ENCODE measurements at regions of chr3 and their contacts with region 1.

Region 1: GRCh38 chr3:61574854-61575253 is 13.5 kb downstream of the PTPRG start:
- ATAC-seq: peak in 3 of 8 experiments; percentile 17 to 94 (median 88)
- H3K4me3 ChIP-seq: no peak overlapping the region
- H3K27ac ChIP-seq: no peak overlapping the region
- H3K4me1 ChIP-seq: peaks cover 0 to 3% of the 10 kb centered on the region in 2 donors

Region 2: DNA sequence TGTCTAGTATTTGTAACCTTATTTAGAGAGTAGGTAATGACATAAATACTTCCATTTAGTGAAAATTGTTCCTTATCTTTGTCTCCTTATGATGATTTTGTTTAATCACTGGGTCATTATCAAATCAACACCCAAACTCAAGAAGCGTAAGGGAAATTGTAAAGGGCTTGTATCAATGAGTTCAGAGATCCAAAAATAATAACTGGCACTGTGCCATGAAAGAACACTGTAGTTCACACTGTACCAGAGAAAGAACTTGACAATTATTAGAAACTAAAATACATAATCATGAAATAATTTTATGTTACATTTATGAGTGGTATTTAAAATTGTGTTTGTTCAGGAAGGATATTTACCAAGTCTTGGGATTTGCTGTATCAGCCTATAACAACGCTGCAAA is 1219.0 kb before region 1 on chr3:
- in situ Hi-C with region 1: no loop called
- ATAC-seq: no peak
- H3K4me3 ChIP-seq: no peak overlapping the region
- H3K27ac ChIP-seq: no peak overlapping the region
- H3K4me1 ChIP-seq: no peaks in the 10 kb centered on the region

Region 3: GRCh38 chr3:61807865-61808276 is 233.0 kb after region 1 on chr3:
- in situ Hi-C with region 1: loop called in 1 of 9 experiments (anchors 25 kb)
- ATAC-seq: peak in 4 of 8 experiments; percentile 33 to 61 (median 52)
- H3K4me3 ChIP-seq: no peak overlapping the region
- H3K27ac ChIP-seq: no peak overlapping the region
- H3K4me1 ChIP-seq: peaks cover 31 to 48% of the 10 kb centered on the region in 2 donors

Measured in motor neuron (in vitro differentiated cells).